Heart left ventricle (tissue), 16 donors: ENCODE measurements at regions of chr9 and their contacts with region 1.

Region 1: GRCh38 chr9:115923903-115924668 is 229.5 kb upstream of the PAPPA start:
- DNase-seq: peak in 3 of 5 donors; percentile 41 to 73 (median 48)
- ATAC-seq: peak; percentile 95 to 98 (median 97)
- H3K4me3 ChIP-seq: no peak overlapping the region
- H3K27ac ChIP-seq: peak overlapping the region in 7 of 12 donors; percentile 11 to 72 (median 48)
- H3K4me1 ChIP-seq: peaks cover 0 to 12% (median 0%) of the 10 kb centered on the region in 12 donors
- H3K27me3 ChIP-seq: no peaks in the 10 kb centered on the region
- CTCF ChIP-seq: no peak
- POLR2A ChIP-seq: no peak

Region 2: GRCh38 chr9:115498303-115498702 is 425.8 kb before region 1 on chr9:
- intact Hi-C with region 1: no loop called
- DNase-seq: no peak
- ATAC-seq: no peak
- H3K4me3 ChIP-seq: no peak overlapping the region
- H3K27ac ChIP-seq: no peak overlapping the region
- H3K4me1 ChIP-seq: peaks cover 0 to 9% (median 0%) of the 10 kb centered on the region in 12 donors
- H3K27me3 ChIP-seq: peaks cover 0 to 2% (median 0%) of the 10 kb centered on the region in 9 donors
- CTCF ChIP-seq: no peak
- POLR2A ChIP-seq: no peak

Region 3: DNA sequence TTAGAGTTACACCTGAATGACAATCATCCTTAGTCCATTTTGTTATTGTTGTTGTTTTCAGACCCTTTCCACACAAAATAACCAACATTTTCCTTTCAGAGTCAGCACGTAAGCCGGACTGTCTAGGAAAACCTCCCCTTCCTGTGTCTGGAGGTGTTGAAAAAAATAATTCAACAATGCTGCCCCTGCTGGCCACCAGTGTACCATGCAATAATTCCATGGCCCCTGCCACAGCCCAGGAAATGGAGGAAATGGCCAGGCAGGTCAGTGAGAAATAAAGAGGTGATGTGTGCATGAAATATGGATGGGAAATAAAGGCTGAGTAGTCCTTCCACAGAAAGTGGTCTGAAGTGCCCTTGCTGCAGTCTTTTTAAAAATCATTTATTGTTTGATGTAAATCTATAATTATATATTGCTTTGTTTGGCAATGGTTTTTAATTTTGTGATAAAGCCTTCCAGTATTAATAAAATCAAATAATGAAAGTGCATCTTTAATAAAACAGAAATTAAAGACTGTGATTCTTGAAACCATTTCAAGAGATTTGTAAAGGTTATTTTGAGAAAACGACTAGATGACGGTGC is 76.8 kb after region 1 on chr9:
- intact Hi-C with region 1: no loop called
- DNase-seq: peak in 1 of 5 donors; percentile 30
- ATAC-seq: peak in 2 of 4 donors; percentile 42 to 59
- H3K4me3 ChIP-seq: no peak overlapping the region
- H3K27ac ChIP-seq: no peak overlapping the region
- H3K4me1 ChIP-seq: no peaks in the 10 kb centered on the region
- H3K27me3 ChIP-seq: no peaks in the 10 kb centered on the region
- CTCF ChIP-seq: peak; percentile 26 to 57 (median 38)
- POLR2A ChIP-seq: no peak

Region 4: DNA sequence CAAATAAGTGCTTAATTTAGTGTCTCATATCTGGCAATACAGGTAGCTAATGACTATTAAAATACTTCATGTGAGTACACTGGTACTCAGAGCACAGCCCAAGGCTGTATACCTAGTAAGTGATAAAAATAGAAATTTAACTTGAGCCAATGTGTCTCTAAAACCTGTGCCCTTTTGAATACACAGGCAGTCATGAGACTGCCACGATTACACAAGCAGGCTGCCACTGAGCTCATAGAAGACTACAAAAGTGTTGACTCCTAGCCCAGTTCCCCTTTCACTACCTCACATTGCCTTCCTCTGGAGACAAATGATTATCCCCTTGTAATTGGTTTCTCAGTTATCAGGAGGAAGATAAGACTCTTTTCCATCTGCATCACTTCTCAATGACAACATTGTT is 163.2 kb after region 1 on chr9:
- intact Hi-C with region 1: loop called in 1 of 10 experiments (anchors 10 kb)
- DNase-seq: peak in 4 of 5 donors; percentile 25 to 72 (median 50)
- ATAC-seq: peak; percentile 91 to 94 (median 94)
- H3K4me3 ChIP-seq: no peak overlapping the region
- H3K27ac ChIP-seq: peak overlapping the region in 11 of 12 donors; percentile 6 to 68 (median 52)
- H3K4me1 ChIP-seq: peaks cover 0 to 20% (median 5%) of the 10 kb centered on the region in 12 donors
- H3K27me3 ChIP-seq: no peaks in the 10 kb centered on the region
- CTCF ChIP-seq: no peak
- POLR2A ChIP-seq: no peak

Region 5: GRCh38 chr9:116174111-116174746 is 250.1 kb after region 1 on chr9:
- intact Hi-C with region 1: no loop called
- DNase-seq: no peak
- ATAC-seq: no peak
- H3K4me3 ChIP-seq: no peak overlapping the region
- H3K27ac ChIP-seq: no peak overlapping the region
- H3K4me1 ChIP-seq: no peaks in the 10 kb centered on the region
- H3K27me3 ChIP-seq: no peaks in the 10 kb centered on the region
- CTCF ChIP-seq: no peak
- POLR2A ChIP-seq: no peak